Endothelial cell of umbilical vein (primary cell): ENCODE measurements at regions of chr13 and their contacts with region 1.

Region 1: GRCh38 chr13:49443704-49444523 is at the starts of genes CAB39L and SETDB2:
- DNase-seq: peak; percentile 99
- H3K4me3 ChIP-seq: peak within 1 kb of the TSS; percentile 43 to 73 (median 66)
- H3K27ac ChIP-seq: peak within 1 kb of the TSS; percentile 73
- H3K4me1 ChIP-seq: peaks cover 20% of the 10 kb centered on the region
- H3K27me3 ChIP-seq: no peaks in the 10 kb centered on the region
- CTCF ChIP-seq: peak; percentile 28 to 52
- POLR2A ChIP-seq: peak; percentile 56
- total RNA-seq, gene CAB39L: 5.8 and 7.2 TPM in 2 replicates
- total RNA-seq, gene SETDB2: 5.4 and 5.6 TPM in 2 replicates

Region 2: GRCh38 chr13:49216334-49216733 is 227.6 kb before region 1 on chr13:
- CTCF ChIA-PET with region 1: interaction called, 3 read pairs
- POLR2A ChIA-PET with region 1: interaction called, 11 read pairs
- dilution Hi-C with region 1: no loop called
- intact Hi-C with region 1: no loop called
- DNase-seq: no peak
- H3K4me3 ChIP-seq: no peak overlapping the region
- H3K27ac ChIP-seq: no peak overlapping the region
- H3K4me1 ChIP-seq: peaks cover 9% of the 10 kb centered on the region
- H3K27me3 ChIP-seq: peaks cover 37 to 43% of the 10 kb centered on the region in 2 experiments
- CTCF ChIP-seq: no peak
- POLR2A ChIP-seq: no peak

Region 3: GRCh38 chr13:49314344-49314882 is 129.5 kb before region 1 on chr13:
- CTCF ChIA-PET with region 1: no interaction called
- POLR2A ChIA-PET with region 1: no interaction called
- dilution Hi-C with region 1: no loop called
- intact Hi-C with region 1: loop called (anchors 1 kb)
- DNase-seq: no peak
- H3K4me3 ChIP-seq: no peak overlapping the region
- H3K27ac ChIP-seq: peak overlapping the region; percentile 84
- H3K4me1 ChIP-seq: peaks cover 10% of the 10 kb centered on the region
- H3K27me3 ChIP-seq: no peaks in the 10 kb centered on the region
- CTCF ChIP-seq: no peak
- POLR2A ChIP-seq: no peak

Region 4: DNA sequence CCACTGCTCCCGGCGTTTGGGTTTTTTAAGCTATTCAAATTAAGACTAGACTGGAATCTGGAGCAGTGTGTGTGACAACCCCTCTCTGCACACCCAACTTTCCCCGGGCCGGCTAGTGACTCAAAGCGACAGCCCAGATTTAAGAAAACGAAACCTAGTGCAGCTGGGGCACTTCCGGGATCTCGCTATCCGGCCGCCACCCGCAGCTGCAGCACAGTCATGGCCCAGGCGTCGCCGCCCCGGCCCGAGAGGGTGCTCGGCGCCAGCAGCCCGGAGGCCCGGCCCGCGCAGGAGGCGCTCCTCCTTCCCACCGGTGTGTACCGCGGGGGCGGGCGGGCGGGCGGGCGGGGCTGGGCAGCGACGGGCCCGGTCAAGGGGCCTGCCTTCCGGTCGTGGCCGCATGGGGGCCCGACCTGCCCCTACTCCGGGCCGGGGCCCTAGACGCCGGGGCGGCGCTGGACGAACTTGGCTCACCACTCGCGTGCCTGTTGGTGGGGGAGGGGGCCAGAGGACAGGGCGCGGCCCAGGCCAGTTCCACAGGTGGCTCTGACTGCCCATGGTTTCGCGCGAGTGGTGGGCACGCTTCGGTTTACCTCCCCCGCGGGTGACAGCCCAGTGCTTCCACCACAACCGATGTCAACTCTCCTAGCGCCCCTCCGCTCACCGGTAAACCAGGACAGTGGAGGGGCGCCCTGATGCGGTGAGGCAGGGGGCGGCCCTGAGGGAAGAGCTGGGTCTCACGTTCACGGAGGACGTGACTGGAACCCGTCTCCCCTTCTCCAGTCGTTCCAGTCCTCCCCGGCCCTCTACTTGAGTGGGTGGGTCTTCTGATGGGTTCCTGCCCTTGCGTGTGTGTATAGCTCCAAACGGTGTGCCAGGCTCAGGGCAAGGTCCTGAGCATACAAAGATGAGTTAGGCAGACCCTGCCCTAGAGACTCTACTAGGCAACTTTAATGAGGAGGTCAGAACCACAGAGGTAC is 52.2 kb after region 1 on chr13 and contains the start of gene PHF11:
- CTCF ChIA-PET with region 1: interaction called, 5 read pairs
- POLR2A ChIA-PET with region 1: no interaction called
- dilution Hi-C with region 1: no loop called
- intact Hi-C with region 1: loop called (anchors 1 kb)
- DNase-seq: peak; percentile 58
- H3K4me3 ChIP-seq: peak within 1 kb of the TSS; percentile 42 to 76 (median 58)
- H3K27ac ChIP-seq: peak within 1 kb of the TSS; percentile 73
- H3K4me1 ChIP-seq: peaks cover 11% of the 10 kb centered on the region
- H3K27me3 ChIP-seq: no peaks in the 10 kb centered on the region
- CTCF ChIP-seq: peak in 1 of 2 donors; percentile 5
- POLR2A ChIP-seq: peak; percentile 59
- total RNA-seq, gene PHF11: 28.2 and 32.4 TPM in 2 replicates

Region 5: GRCh38 chr13:49585220-49586157 is 141.6 kb after region 1 on chr13 and contains the start of gene RCBTB1:
- CTCF ChIA-PET with region 1: no interaction called
- POLR2A ChIA-PET with region 1: no interaction called
- dilution Hi-C with region 1: no loop called
- intact Hi-C with region 1: loop called (anchors 1 kb)
- DNase-seq: peak; percentile 69
- H3K4me3 ChIP-seq: peak within 1 kb of the TSS; percentile 85 to 94 (median 89)
- H3K27ac ChIP-seq: peak within 1 kb of the TSS; percentile 64
- H3K4me1 ChIP-seq: peaks cover 16% of the 10 kb centered on the region
- H3K27me3 ChIP-seq: no peaks in the 10 kb centered on the region
- CTCF ChIP-seq: no peak
- POLR2A ChIP-seq: peak; percentile 69
- total RNA-seq, gene RCBTB1: 23.6 and 23.8 TPM in 2 replicates

Region 6: GRCh38 chr13:49746111-49746510 is 302.2 kb after region 1 on chr13:
- CTCF ChIA-PET with region 1: no interaction called
- POLR2A ChIA-PET with region 1: no interaction called
- dilution Hi-C with region 1: no loop called
- intact Hi-C with region 1: no loop called
- DNase-seq: no peak
- H3K4me3 ChIP-seq: no peak overlapping the region
- H3K27ac ChIP-seq: no peak overlapping the region
- H3K4me1 ChIP-seq: no peaks in the 10 kb centered on the region
- H3K27me3 ChIP-seq: no peaks in the 10 kb centered on the region
- CTCF ChIP-seq: no peak
- POLR2A ChIP-seq: no peak